Brain microvascular endothelial cell (primary cell): ENCODE measurements at regions of chr2 and their contacts with region 1.

Region 1: GRCh38 chr2:176638167-176639015 is 369.1 kb downstream of the MTX2 start:
- DNase-seq: peak; percentile 29
- H3K4me3 ChIP-seq: peak overlapping the region; percentile 62
- H3K27ac ChIP-seq: no peak overlapping the region
- H3K27me3 ChIP-seq: peaks cover 15% of the 10 kb centered on the region
- CTCF ChIP-seq: peak; percentile 74

Region 2: GRCh38 chr2:176140513-176141317 is 497.7 kb before region 1 on chr2:
- in situ Hi-C with region 1: loop called (anchors 25 kb)
- DNase-seq: no peak
- H3K4me3 ChIP-seq: peak overlapping the region; percentile 53
- H3K27ac ChIP-seq: no peak overlapping the region
- H3K27me3 ChIP-seq: peaks cover 75% of the 10 kb centered on the region
- CTCF ChIP-seq: peak; percentile 78